ENCODE measurements at regions of chr6 and their contacts with region 1.

Region 1: GRCh38 chr6:42928986-42929820 is at the start of gene CNPY3:
- DNase-seq: peak; percentile 93 to 97 (median 95)
- ATAC-seq: peak; percentile 94 to 97 (median 96)
- H3K4me3 ChIP-seq: peak within 1 kb of the TSS; percentile 60 to 92 (median 82)
- H3K27ac ChIP-seq: peak within 1 kb of the TSS; percentile 54 to 99 (median 89)
- H3K4me1 ChIP-seq: peaks cover 4 to 59% (median 21%) of the 10 kb centered on the region in 12 donors
- H3K27me3 ChIP-seq: peaks cover 0 to 5% (median 0%) of the 10 kb centered on the region in 9 donors
- CTCF ChIP-seq: peak in 2 of 12 donors; percentile 13 to 23
- POLR2A ChIP-seq: peak in 1 of 2 donors; percentile 64
- total RNA-seq, gene CNPY3: 14.7 to 44.0 (median 20.6) TPM

Region 2: GRCh38 chr6:42978839-42979522 is 49.8 kb after region 1 on chr6 and contains the start of gene PEX6:
- intact Hi-C with region 1: loop called in 4 of 10 experiments (anchors 2 to 5 kb)
- DNase-seq: peak; percentile 90 to 96 (median 94)
- ATAC-seq: peak; percentile 93 to 97 (median 96)
- H3K4me3 ChIP-seq: peak within 1 kb of the TSS; percentile 61 to 99 (median 88)
- H3K27ac ChIP-seq: peak within 1 kb of the TSS; percentile 27 to 95 (median 91)
- H3K4me1 ChIP-seq: peaks cover 0 to 41% (median 28%) of the 10 kb centered on the region in 12 donors
- H3K27me3 ChIP-seq: no peaks in the 10 kb centered on the region
- CTCF ChIP-seq: no peak
- POLR2A ChIP-seq: peak in 1 of 2 donors; percentile 52
- total RNA-seq, gene PEX6: 11.2 to 27.3 (median 19.6) TPM

Region 3: DNA sequence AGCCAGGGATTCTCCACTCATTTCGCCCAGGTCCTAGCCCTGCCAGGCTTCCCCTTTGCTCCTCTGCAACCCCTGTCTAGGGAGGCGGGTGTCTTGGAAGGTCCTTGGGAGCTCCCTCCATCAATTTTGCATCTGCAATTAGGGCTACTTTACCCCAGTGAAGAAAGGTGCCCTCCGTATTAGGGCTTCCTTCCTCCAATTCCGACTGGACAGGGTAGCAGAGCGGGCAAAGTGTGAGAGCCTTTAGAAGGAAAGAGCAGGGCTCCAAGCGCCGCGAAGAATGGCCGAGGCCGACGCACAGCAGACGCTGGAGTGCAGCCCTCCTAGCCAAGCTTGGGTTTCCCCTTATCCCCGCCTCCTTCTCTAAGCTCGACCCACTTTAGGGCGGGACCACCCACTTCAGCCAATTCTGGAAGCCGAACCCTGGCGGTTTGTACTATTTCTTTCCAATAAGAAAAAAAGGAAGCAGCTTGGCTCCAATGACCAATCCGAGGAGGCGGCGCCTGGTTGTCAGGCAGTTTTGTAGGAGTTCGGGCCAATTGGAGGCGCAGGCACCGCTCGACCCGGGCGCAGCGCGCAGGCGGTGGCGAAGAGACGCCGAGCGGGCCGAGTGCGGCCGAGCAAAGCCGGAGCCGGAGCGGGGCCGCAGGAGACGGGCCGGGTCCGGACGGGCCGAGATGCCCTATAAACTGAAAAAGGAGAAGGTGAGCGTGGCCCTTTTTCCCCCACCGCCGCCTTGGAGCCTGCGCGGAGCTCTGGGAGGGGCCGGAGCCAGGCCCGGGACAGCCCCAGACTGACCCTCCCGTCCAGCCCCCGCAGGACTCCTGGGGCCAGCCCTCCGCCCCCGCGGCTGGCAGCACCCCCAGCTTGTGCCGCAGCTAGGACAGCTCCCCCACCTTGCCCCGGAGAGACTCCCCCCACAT is 55.1 kb after region 1 on chr6 and contains the start of gene PPP2R5D:
- intact Hi-C with region 1: loop called in 4 of 10 experiments (anchors 2 to 5 kb)
- DNase-seq: peak; percentile 97 to 99 (median 98)
- ATAC-seq: peak; percentile 95 to 99 (median 98)
- H3K4me3 ChIP-seq: peak within 1 kb of the TSS; percentile 74 to 97 (median 86)
- H3K27ac ChIP-seq: peak within 1 kb of the TSS; percentile 60 to 93 (median 90)
- H3K4me1 ChIP-seq: peaks cover 3 to 61% (median 45%) of the 10 kb centered on the region in 12 donors
- H3K27me3 ChIP-seq: no peaks in the 10 kb centered on the region
- CTCF ChIP-seq: no peak
- POLR2A ChIP-seq: peak in 1 of 2 donors; percentile 93
- total RNA-seq, gene PPP2R5D: 30.9 to 51.3 (median 35.1) TPM

Region 4: GRCh38 chr6:43053545-43054205 is 124.5 kb after region 1 on chr6 and contains the start of gene CUL7:
- intact Hi-C with region 1: loop called in 1 of 10 experiments (anchors 5 kb)
- DNase-seq: peak; percentile 93 to 96 (median 96)
- ATAC-seq: peak; percentile 92 to 97 (median 96)
- H3K4me3 ChIP-seq: peak within 1 kb of the TSS; percentile 36 to 87 (median 74)
- H3K27ac ChIP-seq: peak within 1 kb of the TSS; percentile 81 to 97 (median 94)
- H3K4me1 ChIP-seq: peaks cover 0 to 34% (median 18%) of the 10 kb centered on the region in 12 donors
- H3K27me3 ChIP-seq: no peaks in the 10 kb centered on the region
- CTCF ChIP-seq: peak in 3 of 12 donors; percentile 3 to 12 (median 7)
- POLR2A ChIP-seq: peak in 1 of 2 donors; percentile 83
- total RNA-seq, gene CUL7: 5.6 to 13.2 (median 7.9) TPM